ENCODE measurements at regions of chr1 and their contacts with region 1.

Region 1: DNA sequence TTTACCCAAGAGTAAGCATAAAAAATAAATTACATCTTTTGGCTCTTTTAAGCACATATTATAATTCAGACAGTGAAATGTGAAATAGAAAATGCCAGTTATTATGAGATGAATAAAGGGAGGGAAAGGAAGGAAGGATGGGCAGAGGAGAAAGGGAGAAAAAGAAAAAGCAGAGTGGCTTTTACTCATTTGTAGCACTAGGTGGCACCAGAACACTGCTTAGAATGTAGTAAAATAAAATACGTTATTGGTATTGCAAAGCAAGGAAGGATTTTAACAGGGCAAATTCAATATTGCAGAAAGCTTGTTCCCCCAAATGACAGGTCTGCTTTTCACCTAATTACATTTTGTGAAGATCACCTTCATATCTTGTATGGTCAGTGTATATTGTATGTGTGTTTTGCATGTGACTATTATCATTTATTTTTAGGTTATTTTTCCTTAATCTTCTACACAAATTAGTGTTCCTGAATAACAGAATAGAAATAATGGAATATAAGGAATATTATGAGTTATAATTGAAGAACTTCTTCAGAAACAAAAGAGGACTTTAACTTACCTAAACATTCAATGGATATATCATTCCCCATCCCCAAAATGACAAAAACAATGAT is 9.1 kb upstream of the PCNX2 start:
- DNase-seq: no peak
- ATAC-seq: peak; percentile 65
- H3K4me3 Mint-ChIP-seq: no peak overlapping the region
- H3K27ac Mint-ChIP-seq: no peak overlapping the region
- H3K4me1 Mint-ChIP-seq: no peaks in the 10 kb centered on the region
- H3K27me3 Mint-ChIP-seq: peaks cover 14% of the 10 kb centered on the region
- CTCF ChIP-seq: peak; percentile 88

Region 2: DNA sequence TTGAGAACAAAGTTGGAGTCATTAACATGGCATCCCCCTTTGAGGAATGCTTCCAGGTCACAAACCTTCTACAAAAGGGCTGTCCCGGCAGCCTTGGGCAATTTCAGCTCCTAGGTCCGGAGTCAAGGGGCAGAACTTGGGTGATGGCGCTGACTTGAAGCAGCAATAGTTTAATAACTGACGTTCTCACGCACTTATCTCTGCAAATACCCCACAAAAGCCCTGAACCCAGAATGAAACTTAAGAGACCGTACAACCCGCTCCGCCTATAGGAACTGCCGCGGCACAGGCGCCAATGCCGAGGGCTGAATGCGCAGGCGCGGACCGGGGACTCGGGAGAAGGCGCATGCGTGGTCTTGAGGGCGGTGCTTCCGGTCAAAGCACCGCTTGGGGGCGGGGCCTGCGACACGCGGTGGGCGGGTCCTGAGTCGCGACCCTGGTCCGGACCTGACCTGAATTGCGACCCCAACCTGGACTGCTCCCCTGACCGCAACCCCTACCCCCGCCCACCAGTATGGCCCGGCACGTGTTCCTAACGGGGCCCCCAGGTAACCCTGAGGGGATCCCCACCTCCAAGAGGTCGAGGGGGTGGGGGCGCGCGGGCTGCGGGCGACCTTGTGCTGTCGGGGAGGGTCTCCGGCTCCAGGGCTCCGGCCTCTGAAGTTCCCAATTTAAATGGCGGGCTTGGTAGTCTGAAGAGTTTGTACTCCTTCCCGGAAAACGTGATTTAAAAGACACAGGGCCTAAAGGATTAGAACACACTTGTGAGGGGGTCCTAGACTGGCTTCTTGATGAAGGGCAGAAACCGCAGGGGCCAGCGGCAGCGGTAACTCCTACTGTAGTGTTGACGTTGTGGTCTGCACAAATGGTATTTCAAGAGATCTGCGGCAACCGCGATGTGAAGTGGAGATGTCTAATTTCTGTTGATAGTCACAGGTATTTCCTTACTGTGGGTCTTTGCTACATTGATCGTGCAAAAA is 354.1 kb before region 1 on chr1 and contains the start of gene NTPCR:
- CTCF ChIA-PET with region 1: no interaction called
- POLR2A ChIA-PET with region 1: no interaction called
- intact Hi-C with region 1: no loop called
- DNase-seq: peak; percentile 95
- ATAC-seq: peak; percentile 98
- H3K4me3 Mint-ChIP-seq: peak within 1 kb of the TSS; percentile 96
- H3K27ac Mint-ChIP-seq: peak within 1 kb of the TSS; percentile 95
- H3K4me1 Mint-ChIP-seq: peaks cover 37% of the 10 kb centered on the region
- H3K27me3 Mint-ChIP-seq: no peaks in the 10 kb centered on the region
- CTCF ChIP-seq: no peak
- total RNA-seq, gene NTPCR: 30.4 to 35.0 TPM

Region 3: GRCh38 chr1:233277637-233278606 is 26.7 kb before region 1 on chr1:
- CTCF ChIA-PET with region 1: no interaction called
- POLR2A ChIA-PET with region 1: no interaction called
- intact Hi-C with region 1: no loop called
- DNase-seq: no peak
- ATAC-seq: no peak
- H3K4me3 Mint-ChIP-seq: no peak overlapping the region
- H3K27ac Mint-ChIP-seq: peak overlapping the region; percentile 32
- H3K4me1 Mint-ChIP-seq: peaks cover 30% of the 10 kb centered on the region
- H3K27me3 Mint-ChIP-seq: no peaks in the 10 kb centered on the region
- CTCF ChIP-seq: no peak

Region 4: GRCh38 chr1:233326811-233327650 is 22.4 kb after region 1 on chr1:
- CTCF ChIA-PET with region 1: interaction called, 18 read pairs
- POLR2A ChIA-PET with region 1: no interaction called
- intact Hi-C with region 1: no loop called
- DNase-seq: peak; percentile 93
- ATAC-seq: peak; percentile 97
- H3K4me3 Mint-ChIP-seq: peak overlapping the region; percentile 69
- H3K27ac Mint-ChIP-seq: no peak overlapping the region
- H3K4me1 Mint-ChIP-seq: peaks cover 7% of the 10 kb centered on the region
- H3K27me3 Mint-ChIP-seq: peaks cover 24% of the 10 kb centered on the region
- CTCF ChIP-seq: no peak

Region 5: DNA sequence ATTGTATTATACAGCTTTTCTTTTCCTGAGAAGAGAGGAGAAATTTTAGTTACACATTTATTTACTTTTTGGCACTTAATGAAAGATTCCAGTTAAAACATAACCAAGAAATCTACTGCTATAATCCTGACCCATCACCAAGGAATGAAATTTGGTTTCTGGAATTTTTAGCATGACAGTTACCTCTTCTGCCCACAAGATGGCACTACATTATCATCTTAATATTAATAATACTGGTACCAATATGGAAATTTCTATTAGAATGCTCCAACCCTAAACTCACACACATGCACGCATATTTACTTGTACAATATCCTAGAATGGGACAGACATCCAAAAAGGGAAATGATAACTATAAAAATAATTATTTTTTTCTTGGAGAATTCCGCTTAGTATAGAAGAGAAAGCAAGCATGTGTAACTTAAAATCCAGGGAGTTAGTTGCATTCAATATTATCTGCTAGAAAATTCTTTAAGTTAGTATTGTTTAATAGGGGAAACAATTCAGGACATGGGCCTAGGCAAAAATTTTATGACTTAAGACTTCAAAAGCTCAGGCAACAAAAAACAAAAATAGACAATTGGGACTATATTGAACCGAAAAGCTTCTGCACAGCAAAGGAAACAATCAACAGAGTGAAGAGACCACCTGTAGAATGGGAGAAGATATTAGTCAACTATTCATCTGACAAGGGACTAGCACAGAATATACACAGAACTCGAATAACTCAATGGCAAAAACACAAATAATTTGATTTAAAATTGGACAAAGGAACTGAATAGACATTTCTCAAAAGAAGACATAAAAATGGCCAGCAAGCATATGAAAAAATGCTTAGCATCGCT is 60.3 kb after region 1 on chr1:
- CTCF ChIA-PET with region 1: interaction called, 15 read pairs
- POLR2A ChIA-PET with region 1: no interaction called
- intact Hi-C with region 1: no loop called
- DNase-seq: no peak
- ATAC-seq: no peak
- H3K4me3 Mint-ChIP-seq: no peak overlapping the region
- H3K27ac Mint-ChIP-seq: no peak overlapping the region
- H3K4me1 Mint-ChIP-seq: no peaks in the 10 kb centered on the region
- H3K27me3 Mint-ChIP-seq: peaks cover 3% of the 10 kb centered on the region
- CTCF ChIP-seq: peak; percentile 88

Region 6: GRCh38 chr1:233790662-233791375 is 486.2 kb after region 1 on chr1:
- CTCF ChIA-PET with region 1: interaction called, 8 read pairs
- POLR2A ChIA-PET with region 1: no interaction called
- intact Hi-C with region 1: loop called (anchors 10 kb)
- DNase-seq: peak; percentile 16
- ATAC-seq: peak; percentile 72
- H3K4me3 Mint-ChIP-seq: no peak overlapping the region
- H3K27ac Mint-ChIP-seq: no peak overlapping the region
- H3K4me1 Mint-ChIP-seq: no peaks in the 10 kb centered on the region
- H3K27me3 Mint-ChIP-seq: peaks cover 11% of the 10 kb centered on the region
- CTCF ChIP-seq: peak; percentile 83

Region 7: DNA sequence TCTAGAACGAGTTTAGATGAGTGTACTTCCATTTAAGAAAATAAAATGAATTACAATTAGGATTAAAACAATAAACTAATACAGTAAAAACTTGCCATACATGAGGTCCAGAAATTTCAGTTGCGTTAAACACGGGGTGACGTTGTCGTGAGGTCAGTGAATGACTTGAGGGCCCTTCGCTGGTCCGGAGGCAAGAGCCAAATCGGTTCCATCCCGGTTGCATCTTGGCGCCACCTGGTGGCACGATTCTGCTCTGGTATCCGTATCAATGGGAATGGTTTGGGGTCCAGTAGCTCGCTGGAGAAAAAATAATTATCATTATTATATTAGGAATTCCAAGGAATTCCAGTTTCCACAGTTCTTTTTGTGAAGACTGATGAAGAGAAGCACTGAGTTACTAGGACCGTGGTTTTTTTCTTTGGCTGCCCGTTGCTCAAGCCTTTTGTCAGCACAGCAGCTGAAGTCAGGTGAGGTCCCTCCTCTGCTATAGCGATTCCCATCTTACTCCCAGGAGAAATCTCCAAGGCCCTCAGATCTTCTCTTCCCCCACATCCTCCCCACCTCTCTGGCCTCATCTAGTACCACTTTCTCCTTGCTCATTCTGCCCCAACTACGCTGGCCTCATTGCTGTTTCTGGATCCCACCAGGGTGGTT is 761.3 kb after region 1 on chr1:
- CTCF ChIA-PET with region 1: interaction called, 6 read pairs
- POLR2A ChIA-PET with region 1: no interaction called
- intact Hi-C with region 1: loop called (anchors 5 kb)
- DNase-seq: peak; percentile 86
- ATAC-seq: no peak
- H3K4me3 Mint-ChIP-seq: no peak overlapping the region
- H3K27ac Mint-ChIP-seq: no peak overlapping the region
- H3K4me1 Mint-ChIP-seq: no peaks in the 10 kb centered on the region
- H3K27me3 Mint-ChIP-seq: peaks cover 3% of the 10 kb centered on the region
- CTCF ChIP-seq: peak; percentile 78